AG04449 (cell line): ENCODE measurements at regions of chr12 and their contacts with region 1.

Region 1: GRCh38 chr12:123232807-123233543 is at the starts of genes MPHOSPH9 and MTRFR:
- DNase-seq: peak; percentile 95
- H3K4me3 ChIP-seq: peak within 1 kb of the TSS; percentile 98
- CTCF ChIP-seq: no peak

Region 2: GRCh38 chr12:122793685-122794106 is 439.3 kb before region 1 on chr12:
- CTCF ChIA-PET with region 1: interaction called, 23 read pairs
- POLR2A ChIA-PET with region 1: no interaction called
- DNase-seq: no peak
- H3K4me3 ChIP-seq: no peak overlapping the region
- CTCF ChIP-seq: peak; percentile 34

Region 3: GRCh38 chr12:122965851-122966722 is 266.9 kb before region 1 on chr12 and contains the start of gene ABCB9:
- CTCF ChIA-PET with region 1: interaction called, 11 read pairs
- POLR2A ChIA-PET with region 1: interaction called, 14 read pairs
- DNase-seq: no peak
- H3K4me3 ChIP-seq: peak within 1 kb of the TSS; percentile 88
- CTCF ChIP-seq: peak; percentile 12

Region 4: GRCh38 chr12:122980183-122981046 is 252.6 kb before region 1 on chr12 and contains the start of gene ARL6IP4:
- CTCF ChIA-PET with region 1: interaction called, 27 read pairs
- POLR2A ChIA-PET with region 1: interaction called, 25 read pairs
- DNase-seq: no peak
- H3K4me3 ChIP-seq: peak within 1 kb of the TSS; percentile 87
- CTCF ChIP-seq: no peak

Region 5: GRCh38 chr12:123043536-123044001 is 189.4 kb before region 1 on chr12:
- CTCF ChIA-PET with region 1: interaction called, 312 read pairs
- POLR2A ChIA-PET with region 1: interaction called, 23 read pairs
- DNase-seq: peak; percentile 87
- H3K4me3 ChIP-seq: no peak overlapping the region
- CTCF ChIP-seq: peak; percentile 93

Region 6: GRCh38 chr12:123269384-123269892 is 36.5 kb after region 1 on chr12:
- CTCF ChIA-PET with region 1: interaction called, 4 read pairs
- POLR2A ChIA-PET with region 1: interaction called, 11 read pairs
- DNase-seq: no peak
- H3K4me3 ChIP-seq: peak overlapping the region; percentile 85
- CTCF ChIP-seq: peak; percentile 19

Region 7: DNA sequence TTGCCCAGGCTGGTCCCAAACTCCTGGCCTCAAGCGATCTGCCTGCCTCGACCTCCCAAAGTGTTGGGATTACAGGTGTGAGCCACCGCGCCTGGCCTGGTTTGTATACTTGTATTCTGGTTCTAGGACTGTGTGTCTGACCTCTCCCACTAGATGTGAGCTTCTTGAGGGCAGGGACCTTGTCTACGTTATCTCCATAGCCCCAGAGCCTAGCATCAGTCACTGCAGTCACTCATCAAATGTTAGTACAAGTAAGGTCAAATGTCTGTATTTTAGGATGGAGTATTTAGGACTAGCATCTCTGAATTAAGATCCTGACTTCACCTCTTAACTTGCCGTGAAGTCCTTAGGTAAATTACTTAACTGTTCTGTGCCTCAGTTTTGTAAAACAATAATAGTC is 200.6 kb after region 1 on chr12:
- CTCF ChIA-PET with region 1: no interaction called
- POLR2A ChIA-PET with region 1: no interaction called
- DNase-seq: no peak
- H3K4me3 ChIP-seq: no peak overlapping the region
- CTCF ChIP-seq: no peak